Activated CD4-positive, alpha-beta memory T cell treated with anti-CD3 and anti-CD28 coated beads, Interleukin-2, amount 10 ng/mL, durations not matched to agents 7 days and 5 days (primary cell): ENCODE measurements at regions of chr16 and their contacts with region 1.

Region 1: DNA sequence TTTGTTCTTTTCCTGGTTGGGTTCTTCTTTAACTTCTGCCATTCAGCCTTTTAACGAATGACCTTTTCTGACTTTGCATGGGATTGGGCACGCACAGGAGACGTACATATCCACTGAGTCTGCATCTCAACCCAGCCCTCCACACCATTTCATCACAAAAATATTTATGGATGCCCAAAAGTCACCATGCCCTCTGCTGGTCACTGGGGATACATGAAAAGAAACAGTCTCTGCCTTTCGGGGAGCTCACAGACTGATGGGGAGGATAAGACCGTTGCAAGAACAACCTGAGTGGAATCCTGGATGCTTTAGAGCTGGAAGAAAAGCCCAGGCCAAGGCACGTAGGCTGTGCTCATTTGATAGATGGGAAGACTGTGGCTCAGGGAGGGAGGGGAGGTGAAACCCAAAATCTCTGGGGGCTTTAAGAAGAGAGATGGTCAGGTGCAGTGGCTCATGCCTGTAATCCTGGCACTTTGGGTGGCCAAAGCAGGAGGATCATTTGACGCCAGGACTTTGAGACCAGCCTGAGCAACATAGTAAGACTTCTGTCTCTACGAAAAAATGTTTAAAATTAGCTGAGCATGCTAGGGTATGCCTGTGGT is 7.9 kb upstream of the MT2A start:
- DNase-seq: peak; percentile 42
- H3K4me3 Mint-ChIP-seq: no peak overlapping the region
- H3K27ac Mint-ChIP-seq: no peak overlapping the region
- H3K4me1 Mint-ChIP-seq: peaks cover 8% of the 10 kb centered on the region
- H3K27me3 Mint-ChIP-seq: peaks cover 33% of the 10 kb centered on the region

Region 2: GRCh38 chr16:56569801-56570370 is 30.6 kb before region 1 on chr16:
- CTCF ChIA-PET with region 1: no interaction called
- POLR2A ChIA-PET with region 1: no interaction called
- DNase-seq: no peak
- H3K4me3 Mint-ChIP-seq: no peak overlapping the region
- H3K27ac Mint-ChIP-seq: no peak overlapping the region
- H3K4me1 Mint-ChIP-seq: peaks cover 7% of the 10 kb centered on the region
- H3K27me3 Mint-ChIP-seq: peaks cover 10% of the 10 kb centered on the region

Region 3: DNA sequence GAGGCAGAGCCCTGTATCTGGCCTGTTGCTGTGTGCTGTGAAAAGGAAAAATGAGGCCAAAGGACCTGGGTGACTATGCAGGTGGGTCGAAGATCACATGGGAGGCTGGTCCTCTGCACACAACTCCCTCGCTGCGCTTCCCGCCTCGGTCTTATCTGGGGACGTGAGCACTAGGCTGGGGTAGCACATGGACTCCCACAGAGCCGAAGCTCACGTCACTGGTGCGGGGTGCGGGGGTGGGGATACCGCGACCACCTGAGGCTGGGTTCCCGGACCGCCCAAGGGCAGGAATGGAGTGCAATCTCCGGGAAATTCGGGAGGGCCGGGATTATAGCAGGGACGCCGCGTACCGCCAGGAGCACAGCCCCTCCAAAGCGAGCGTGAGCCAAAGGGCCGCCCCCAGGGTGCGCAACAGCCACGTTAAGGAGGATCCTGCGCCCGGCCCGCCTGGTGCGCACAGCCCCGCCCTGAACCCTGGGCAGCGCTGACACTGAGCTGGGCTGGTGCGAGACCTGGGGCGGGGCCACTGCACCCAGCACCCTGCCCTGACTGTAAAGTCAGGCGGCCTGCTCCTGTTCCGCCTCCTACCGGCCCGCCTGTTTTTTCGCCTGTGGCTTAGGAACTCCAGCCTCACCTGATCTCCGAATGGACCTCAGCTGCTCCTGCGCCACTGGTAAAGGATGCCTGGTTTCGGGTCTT is 42.7 kb after region 1 on chr16:
- CTCF ChIA-PET with region 1: interaction called, 10 read pairs
- POLR2A ChIA-PET with region 1: no interaction called
- DNase-seq: peak; percentile 85
- H3K4me3 Mint-ChIP-seq: peak overlapping the region; percentile 58
- H3K27ac Mint-ChIP-seq: no peak overlapping the region
- H3K4me1 Mint-ChIP-seq: peaks cover 24% of the 10 kb centered on the region
- H3K27me3 Mint-ChIP-seq: peaks cover 68% of the 10 kb centered on the region